ENCODE measurements at regions of chr12 and their contacts with region 1.

Region 1: GRCh38 chr12:10721651-10722501 is 1.2 kb downstream of the YBX3 start:
- DNase-seq: peak; percentile 81 to 89
- H3K4me3 ChIP-seq: peak overlapping the region; percentile 95
- H3K4me3 Mint-ChIP-seq: peak overlapping the region; percentile 87
- H3K27ac Mint-ChIP-seq: peak overlapping the region; percentile 96
- H3K4me1 ChIP-seq: peaks cover 46% of the 10 kb centered on the region
- H3K4me1 Mint-ChIP-seq: peaks cover 48% of the 10 kb centered on the region
- H3K27me3 ChIP-seq: no peaks in the 10 kb centered on the region
- H3K27me3 Mint-ChIP-seq: peaks cover 4% of the 10 kb centered on the region
- CTCF ChIP-seq: no peak

Region 2: GRCh38 chr12:10613349-10614055 is 108.4 kb before region 1 on chr12 and contains the start of gene MAGOHB:
- CTCF ChIA-PET with region 1: interaction called, 4 read pairs
- POLR2A ChIA-PET with region 1: no interaction called
- intact Hi-C with region 1: loop called (anchors 1 kb)
- DNase-seq: peak; percentile 99 to 100
- H3K4me3 ChIP-seq: peak within 1 kb of the TSS; percentile 90
- H3K4me3 Mint-ChIP-seq: peak within 1 kb of the TSS; percentile 100
- H3K27ac Mint-ChIP-seq: peak within 1 kb of the TSS; percentile 100
- H3K4me1 ChIP-seq: peaks cover 5% of the 10 kb centered on the region; the same call in 1 of the 2 replicates
- H3K4me1 Mint-ChIP-seq: peaks cover 20% of the 10 kb centered on the region
- H3K27me3 ChIP-seq: no peaks in the 10 kb centered on the region
- H3K27me3 Mint-ChIP-seq: no peaks in the 10 kb centered on the region
- CTCF ChIP-seq: no peak
- total RNA-seq, gene MAGOHB: 134 and 137 TPM in 2 replicates